ENCODE measurements at regions of chr5 and their contacts with region 1.

Region 1: DNA sequence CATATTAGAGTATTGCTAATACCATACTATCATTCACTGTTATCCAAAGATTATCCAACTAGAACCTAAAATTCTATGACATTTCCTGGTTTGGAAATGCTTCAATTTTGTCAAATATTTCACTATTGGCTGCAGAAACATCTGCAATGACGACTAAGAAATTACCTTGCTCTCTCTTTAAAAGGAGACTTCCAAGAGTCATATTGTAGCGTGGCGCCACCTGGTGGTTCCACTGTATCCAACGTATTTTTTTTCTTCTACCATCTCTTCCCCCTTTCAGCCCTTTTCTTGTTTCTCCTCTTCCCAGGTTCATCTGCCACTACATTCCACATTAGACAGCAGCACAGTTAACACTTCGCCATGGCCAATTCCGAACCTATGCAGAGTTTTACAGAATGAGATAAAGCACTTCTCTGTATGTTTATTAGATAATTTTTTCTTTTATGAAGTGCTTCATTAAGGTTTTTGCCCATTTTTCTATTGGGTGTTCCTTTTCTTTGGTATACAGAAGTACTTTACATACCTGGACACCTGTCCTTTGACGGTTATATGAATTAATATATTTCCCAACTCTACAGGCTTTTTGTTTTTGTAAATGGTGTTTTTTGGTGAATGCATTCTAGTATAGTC is 153.5 kb downstream of the CDC42SE2 start:
- DNase-seq: peak; percentile 79
- H3K4me3 ChIP-seq: no peak overlapping the region
- H3K27ac ChIP-seq: no peak overlapping the region
- H3K4me1 ChIP-seq: no peaks in the 10 kb centered on the region
- H3K27me3 ChIP-seq: no peaks in the 10 kb centered on the region
- CTCF ChIP-seq: peak; percentile 60 to 64
- POLR2A ChIP-seq: no peak

Region 2: GRCh38 chr5:130871346-130872086 is 545.8 kb before region 1 on chr5:
- CTCF ChIA-PET with region 1: interaction called, 18 read pairs
- POLR2A ChIA-PET with region 1: no interaction called
- dilution Hi-C with region 1: no loop called
- intact Hi-C with region 1: no loop called
- DNase-seq: peak; percentile 36
- H3K4me3 ChIP-seq: no peak overlapping the region
- H3K27ac ChIP-seq: no peak overlapping the region
- H3K4me1 ChIP-seq: no peaks in the 10 kb centered on the region
- H3K27me3 ChIP-seq: no peaks in the 10 kb centered on the region
- CTCF ChIP-seq: peak; percentile 35 to 52
- POLR2A ChIP-seq: no peak

Region 3: GRCh38 chr5:131109540-131110255 is 307.7 kb before region 1 on chr5:
- CTCF ChIA-PET with region 1: no interaction called
- POLR2A ChIA-PET with region 1: no interaction called
- dilution Hi-C with region 1: no loop called
- intact Hi-C with region 1: loop called (anchors 5 kb)
- DNase-seq: peak; percentile 52
- H3K4me3 ChIP-seq: no peak overlapping the region
- H3K27ac ChIP-seq: no peak overlapping the region
- H3K4me1 ChIP-seq: no peaks in the 10 kb centered on the region
- H3K27me3 ChIP-seq: peaks cover 0 to 2% of the 10 kb centered on the region in 2 experiments
- CTCF ChIP-seq: peak; percentile 40 to 57
- POLR2A ChIP-seq: no peak

Region 4: GRCh38 chr5:131165119-131165727 is 252.1 kb before region 1 on chr5 and contains the start of gene HINT1:
- CTCF ChIA-PET with region 1: interaction called, 5 read pairs
- POLR2A ChIA-PET with region 1: no interaction called
- dilution Hi-C with region 1: no loop called
- intact Hi-C with region 1: loop called (anchors 1 kb)
- DNase-seq: peak; percentile 91
- H3K4me3 ChIP-seq: peak within 1 kb of the TSS; percentile 79 to 100 (median 99)
- H3K27ac ChIP-seq: peak within 1 kb of the TSS; percentile 95
- H3K4me1 ChIP-seq: peaks cover 11% of the 10 kb centered on the region
- H3K27me3 ChIP-seq: no peaks in the 10 kb centered on the region
- CTCF ChIP-seq: peak in 1 of 2 donors; percentile 22
- POLR2A ChIP-seq: peak; percentile 75
- total RNA-seq, gene HINT1: 217 and 221 TPM in 2 replicates

Region 5: GRCh38 chr5:131394128-131394527 is 23.2 kb before region 1 on chr5:
- CTCF ChIA-PET with region 1: no interaction called
- POLR2A ChIA-PET with region 1: no interaction called
- dilution Hi-C with region 1: no loop called
- intact Hi-C with region 1: no loop called
- DNase-seq: peak; percentile 85
- H3K4me3 ChIP-seq: no peak overlapping the region
- H3K27ac ChIP-seq: peak overlapping the region; percentile 35
- H3K4me1 ChIP-seq: peaks cover 4% of the 10 kb centered on the region
- H3K27me3 ChIP-seq: no peaks in the 10 kb centered on the region
- CTCF ChIP-seq: no peak
- POLR2A ChIP-seq: no peak